Left ventricle myocardium inferior (tissue), 1 donor: ENCODE measurements at regions of chr9 and their contacts with region 1.

Region 1: DNA sequence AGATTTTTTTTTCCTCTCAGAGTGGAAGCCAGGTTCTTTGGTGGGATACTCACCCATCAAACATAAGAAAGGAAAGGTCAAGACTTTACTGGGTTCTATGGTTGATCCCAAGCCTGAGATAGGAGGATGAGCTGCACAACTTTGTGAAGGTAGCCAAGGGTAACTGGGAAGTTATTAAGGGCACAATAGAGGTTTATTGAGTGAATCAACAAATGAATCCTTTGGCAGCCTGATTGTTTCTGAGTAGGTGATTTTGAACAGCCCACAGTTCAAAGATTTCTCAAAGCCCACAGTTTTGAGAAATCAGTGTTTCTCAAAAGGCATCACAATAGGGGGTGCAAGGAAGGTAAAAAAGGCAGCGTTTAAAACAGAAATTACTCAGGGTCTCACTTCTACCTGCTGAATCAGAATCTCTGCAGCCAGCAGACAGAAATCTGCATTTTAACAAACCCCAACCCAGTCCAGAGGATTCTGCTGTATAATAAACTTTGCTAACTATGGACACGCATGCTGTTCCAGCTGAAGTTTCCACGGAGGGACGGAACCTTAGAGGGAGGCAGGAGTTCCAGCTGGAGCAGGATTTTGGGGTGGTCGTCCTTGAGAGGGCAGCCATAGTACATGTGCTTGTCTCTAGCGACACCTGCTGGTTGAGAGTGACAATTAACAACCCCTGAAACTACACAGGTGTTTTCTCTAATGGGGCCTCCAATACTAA is 32.7 kb upstream of the FSD1L start:
- DNase-seq: no peak
- H3K4me3 ChIP-seq: no peak overlapping the region
- H3K27ac ChIP-seq: no peak overlapping the region
- H3K4me1 ChIP-seq: peaks cover 3% of the 10 kb centered on the region
- H3K27me3 ChIP-seq: no peaks in the 10 kb centered on the region
- CTCF ChIP-seq: peak; percentile 88

Region 2: GRCh38 chr9:104868687-104869404 is 546.3 kb before region 1 on chr9:
- intact Hi-C with region 1: loop called (anchors 5 kb)
- DNase-seq: peak; percentile 69
- H3K4me3 ChIP-seq: no peak overlapping the region
- H3K27ac ChIP-seq: peak overlapping the region; percentile 79
- H3K4me1 ChIP-seq: peaks cover 75% of the 10 kb centered on the region
- H3K27me3 ChIP-seq: no peaks in the 10 kb centered on the region
- CTCF ChIP-seq: no peak

Region 3: DNA sequence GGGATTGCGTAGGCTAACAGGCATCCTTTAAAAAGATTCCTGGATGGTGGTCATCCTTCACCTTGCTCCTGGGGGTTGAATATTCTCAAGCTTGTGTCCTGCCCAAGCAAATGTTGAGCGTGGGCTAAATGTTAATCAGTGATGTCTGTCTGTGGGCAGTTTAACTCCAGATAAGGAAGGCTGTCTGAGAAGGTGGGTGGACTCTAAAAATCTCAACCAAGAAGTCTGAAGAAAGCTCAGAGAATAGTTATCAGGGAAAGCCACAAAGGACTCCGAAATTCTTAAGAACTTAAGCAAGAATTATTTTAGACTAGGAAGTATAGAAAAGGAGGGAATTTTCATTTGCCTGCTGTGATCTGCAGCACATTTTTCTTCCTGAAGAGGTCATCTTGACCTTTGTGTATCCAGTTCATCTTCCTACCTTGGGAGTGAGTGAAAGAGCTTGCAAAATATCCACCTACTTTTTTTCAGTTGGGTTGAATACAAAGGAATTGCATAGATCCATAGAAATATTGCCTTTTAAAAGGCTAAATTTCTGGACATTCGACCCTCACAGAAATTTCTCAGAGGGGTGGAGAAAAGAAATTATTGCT is 45.1 kb before region 1 on chr9:
- intact Hi-C with region 1: no loop called
- DNase-seq: no peak
- H3K4me3 ChIP-seq: no peak overlapping the region
- H3K27ac ChIP-seq: no peak overlapping the region
- H3K4me1 ChIP-seq: no peaks in the 10 kb centered on the region
- H3K27me3 ChIP-seq: no peaks in the 10 kb centered on the region
- CTCF ChIP-seq: no peak